HepG2 (cell line): ENCODE measurements at regions of chr2 and their contacts with region 1.

Region 1: GRCh38 chr2:14053105-14053504 is 579.4 kb upstream of the LRATD1 start:
- DNase-seq: no peak
- ATAC-seq: no peak
- H3K4me3 ChIP-seq: no peak overlapping the region
- H3K27ac ChIP-seq: no peak overlapping the region
- H3K4me1 ChIP-seq: no peaks in the 10 kb centered on the region
- H3K27me3 ChIP-seq: no peaks in the 10 kb centered on the region
- CTCF ChIP-seq: no peak
- EP300 ChIP-seq: no peak
- POLR2A ChIP-seq: no peak
- RAD21 ChIP-seq: no peak

Region 2: GRCh38 chr2:14023558-14023957 is 29.5 kb before region 1 on chr2:
- CTCF ChIA-PET with region 1: no interaction called
- POLR2A ChIA-PET with region 1: no interaction called
- in situ Hi-C with region 1: no loop called
- intact Hi-C with region 1: loop called (anchors 1 kb)
- DNase-seq: no peak
- ATAC-seq: no peak
- H3K4me3 ChIP-seq: no peak overlapping the region
- H3K27ac ChIP-seq: no peak overlapping the region
- H3K4me1 ChIP-seq: no peaks in the 10 kb centered on the region
- H3K27me3 ChIP-seq: no peaks in the 10 kb centered on the region
- CTCF ChIP-seq: no peak
- EP300 ChIP-seq: no peak
- POLR2A ChIP-seq: no peak
- RAD21 ChIP-seq: no peak

Region 3: DNA sequence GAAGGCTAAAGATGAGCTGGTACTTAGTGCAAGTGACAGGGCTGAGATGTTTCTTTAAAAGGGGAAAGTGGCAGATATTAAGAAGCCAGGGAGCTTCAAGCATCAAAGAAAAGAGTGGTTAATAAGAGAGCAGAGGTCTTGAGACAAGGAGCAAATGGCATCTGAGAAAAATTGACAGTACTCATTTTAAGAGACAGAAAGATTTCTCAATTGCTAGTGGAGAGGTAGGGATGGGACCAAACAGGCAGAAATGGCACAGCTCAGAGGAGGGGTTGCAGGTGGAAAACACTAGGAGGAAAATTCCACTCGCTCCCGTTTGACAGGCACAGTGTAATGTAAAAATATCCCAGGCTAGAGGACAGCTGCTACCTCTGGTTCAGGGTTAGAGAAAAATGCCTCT is 14.0 kb before region 1 on chr2:
- CTCF ChIA-PET with region 1: no interaction called
- POLR2A ChIA-PET with region 1: no interaction called
- in situ Hi-C with region 1: no loop called
- intact Hi-C with region 1: no loop called
- DNase-seq: no peak
- ATAC-seq: no peak
- H3K4me3 ChIP-seq: no peak overlapping the region
- H3K27ac ChIP-seq: no peak overlapping the region
- H3K4me1 ChIP-seq: no peaks in the 10 kb centered on the region
- H3K27me3 ChIP-seq: no peaks in the 10 kb centered on the region; a peak in 1 of 5 replicates
- CTCF ChIP-seq: no peak
- EP300 ChIP-seq: no peak
- POLR2A ChIP-seq: no peak
- RAD21 ChIP-seq: no peak